Activated CD4-positive, alpha-beta memory T cell treated with anti-CD3 and anti-CD28 coated beads for 36 hours (primary cell): ENCODE measurements at regions of chr14 and their contacts with region 1.

Region 1: GRCh38 chr14:65206448-65207096 is 104.3 kb upstream of the MAX start:
- DNase-seq: peak; percentile 35
- H3K4me3 Mint-ChIP-seq: peak overlapping the region; percentile 54
- H3K27ac Mint-ChIP-seq: peak overlapping the region; percentile 82
- H3K4me1 Mint-ChIP-seq: peaks cover 61% of the 10 kb centered on the region
- H3K27me3 Mint-ChIP-seq: peaks cover 2% of the 10 kb centered on the region

Region 2: GRCh38 chr14:65170768-65171507 is 35.6 kb before region 1 on chr14:
- CTCF ChIA-PET with region 1: interaction called, 8 read pairs
- POLR2A ChIA-PET with region 1: interaction called, 4 read pairs
- intact Hi-C with region 1: loop called (anchors 1 kb)
- DNase-seq: peak; percentile 72
- H3K4me3 Mint-ChIP-seq: peak overlapping the region; percentile 68
- H3K27ac Mint-ChIP-seq: no peak overlapping the region
- H3K4me1 Mint-ChIP-seq: peaks cover 14% of the 10 kb centered on the region
- H3K27me3 Mint-ChIP-seq: peaks cover 6% of the 10 kb centered on the region

Region 3: DNA sequence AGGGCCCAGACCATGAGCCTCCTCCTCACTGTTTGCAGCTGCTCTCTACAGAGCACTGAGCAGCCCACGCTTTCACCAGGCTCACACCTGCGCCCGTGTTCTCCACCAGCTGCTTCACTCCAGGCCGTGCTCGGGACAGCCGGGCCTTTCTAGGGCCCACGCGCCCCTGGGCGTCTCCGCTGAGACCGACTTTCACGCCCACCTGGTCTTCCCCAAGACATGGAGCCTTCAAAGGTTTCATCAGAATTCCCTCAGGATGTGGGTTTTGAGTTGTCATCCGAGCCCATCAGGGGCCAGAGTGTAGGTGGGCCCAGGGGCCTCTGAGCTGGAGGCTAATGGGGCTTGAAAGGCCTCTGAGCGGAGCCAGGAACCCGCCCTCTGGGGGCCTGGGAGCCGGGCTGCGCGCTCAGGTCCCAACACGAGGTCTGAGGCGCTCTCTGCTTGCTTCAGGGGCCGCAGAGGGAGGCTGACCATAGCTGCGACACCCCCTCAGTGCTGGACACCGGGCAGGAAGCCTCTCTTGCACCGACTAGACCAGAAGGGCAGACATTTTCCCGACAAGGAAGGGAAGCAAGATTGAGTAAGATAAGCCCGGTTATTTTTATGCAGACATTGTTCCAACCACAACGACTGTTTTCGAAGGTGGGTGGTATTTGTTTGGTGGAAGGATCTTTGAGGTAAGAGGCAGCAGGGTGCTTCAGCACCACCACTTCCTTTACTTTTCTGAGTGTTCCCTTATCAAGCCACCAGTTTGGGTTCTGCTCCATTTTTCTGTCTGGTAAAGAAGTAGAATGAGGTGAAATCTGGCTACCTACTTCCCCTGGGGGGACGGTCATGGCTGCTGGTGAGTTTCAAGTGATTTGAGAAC is 80.9 kb after region 1 on chr14:
- CTCF ChIA-PET with region 1: no interaction called
- POLR2A ChIA-PET with region 1: interaction called, 4 read pairs
- intact Hi-C with region 1: loop called (anchors 1 kb)
- DNase-seq: peak; percentile 69
- H3K4me3 Mint-ChIP-seq: peak overlapping the region; percentile 80
- H3K27ac Mint-ChIP-seq: peak overlapping the region; percentile 96
- H3K4me1 Mint-ChIP-seq: peaks cover 64% of the 10 kb centered on the region
- H3K27me3 Mint-ChIP-seq: no peaks in the 10 kb centered on the region

Region 4: DNA sequence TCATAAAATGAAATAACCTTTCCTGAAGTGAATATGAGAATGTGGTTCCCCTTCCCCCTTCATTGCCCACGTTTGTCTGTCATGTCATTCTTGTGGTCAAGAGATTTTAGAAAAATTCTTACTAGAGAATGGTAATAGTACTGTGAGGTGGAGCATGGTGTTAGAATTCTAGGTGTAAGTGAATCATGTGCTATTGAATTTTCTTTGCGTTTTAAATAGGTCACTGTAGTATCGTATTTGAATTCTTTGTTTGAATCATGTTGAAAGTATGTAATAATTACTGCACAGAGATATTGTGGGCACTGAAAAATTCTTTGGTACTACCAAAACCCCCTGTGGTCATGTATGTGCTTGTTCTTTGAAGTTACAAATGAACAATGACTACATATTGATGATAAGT is 255.8 kb after region 1 on chr14:
- CTCF ChIA-PET with region 1: no interaction called
- POLR2A ChIA-PET with region 1: no interaction called
- intact Hi-C with region 1: loop called (anchors 1 kb)
- DNase-seq: peak; percentile 45
- H3K4me3 Mint-ChIP-seq: no peak overlapping the region
- H3K27ac Mint-ChIP-seq: peak overlapping the region; percentile 21
- H3K4me1 Mint-ChIP-seq: peaks cover 36% of the 10 kb centered on the region
- H3K27me3 Mint-ChIP-seq: no peaks in the 10 kb centered on the region

Region 5: GRCh38 chr14:65804752-65805473 is 598.3 kb after region 1 on chr14:
- CTCF ChIA-PET with region 1: no interaction called
- POLR2A ChIA-PET with region 1: no interaction called
- intact Hi-C with region 1: loop called (anchors 2 kb)
- DNase-seq: peak; percentile 26
- H3K4me3 Mint-ChIP-seq: no peak overlapping the region
- H3K27ac Mint-ChIP-seq: no peak overlapping the region
- H3K4me1 Mint-ChIP-seq: peaks cover 8% of the 10 kb centered on the region
- H3K27me3 Mint-ChIP-seq: no peaks in the 10 kb centered on the region